Aorta (tissue), 5 donors: ENCODE measurements at regions of chr11 and their contacts with region 1.

Region 1: GRCh38 chr11:662689-663274 is 25.7 kb downstream of the DRD4 start:
- DNase-seq: peak; percentile 71 to 88
- ATAC-seq: peak; percentile 77
- H3K4me3 ChIP-seq: no peak overlapping the region
- H3K27ac ChIP-seq: no peak overlapping the region
- H3K4me1 ChIP-seq: no peaks in the 10 kb centered on the region
- H3K27me3 ChIP-seq: no peaks in the 10 kb centered on the region

Region 2: DNA sequence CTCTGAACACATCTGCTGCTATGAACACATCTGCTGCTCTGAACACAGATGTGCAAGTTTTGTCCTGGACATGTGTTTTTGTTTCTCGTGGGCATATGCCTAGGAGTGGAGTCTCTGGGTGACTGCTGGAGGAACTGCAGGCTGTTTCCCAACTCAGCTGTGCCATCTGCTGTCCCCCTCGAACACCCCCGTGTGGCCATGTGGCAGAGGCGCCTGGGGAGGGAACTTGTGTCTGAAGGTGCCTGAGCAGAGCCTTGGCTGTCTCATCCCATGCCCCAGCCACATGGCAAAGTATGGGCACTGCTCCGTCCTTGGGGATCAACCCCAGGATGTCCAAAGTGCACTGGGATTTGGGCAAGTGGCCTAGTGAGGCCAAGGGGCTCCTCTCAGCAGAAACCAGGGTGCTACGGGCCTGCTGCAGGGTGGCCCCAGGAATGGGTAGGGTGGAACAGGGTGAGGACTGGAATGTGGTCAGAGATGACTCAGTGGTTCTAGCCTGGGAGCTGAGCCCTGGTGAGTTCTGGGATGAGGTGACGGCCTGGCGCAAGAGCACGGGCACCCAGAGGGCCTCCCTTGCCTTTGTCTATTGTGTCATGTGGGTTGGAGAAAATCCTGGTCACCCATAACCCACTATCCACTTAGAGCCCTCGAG is 99.8 kb after region 1 on chr11:
- intact Hi-C with region 1: loop called in 1 of 2 experiments (anchors 5 kb)
- DNase-seq: peak in 1 of 2 donors; percentile 72
- ATAC-seq: no peak
- H3K4me3 ChIP-seq: no peak overlapping the region
- H3K27ac ChIP-seq: no peak overlapping the region
- H3K4me1 ChIP-seq: no peaks in the 10 kb centered on the region
- H3K27me3 ChIP-seq: no peaks in the 10 kb centered on the region

Region 3: GRCh38 chr11:876519-876918 is 213.7 kb after region 1 on chr11:
- intact Hi-C with region 1: no loop called
- DNase-seq: no peak
- ATAC-seq: no peak
- H3K4me3 ChIP-seq: no peak overlapping the region
- H3K27ac ChIP-seq: no peak overlapping the region
- H3K4me1 ChIP-seq: no peaks in the 10 kb centered on the region
- H3K27me3 ChIP-seq: no peaks in the 10 kb centered on the region